A549 (cell line): ENCODE measurements at regions of chr9 and their contacts with region 1.

Region 1: GRCh38 chr9:121278535-121279261 is 10.7 kb downstream of the GSN start:
- DNase-seq: peak in 1 of 2 experiments; percentile 75
- ATAC-seq: peak; percentile 75 to 87
- H3K4me3 ChIP-seq: no peak overlapping the region
- H3K27ac ChIP-seq: peak overlapping the region; percentile 58 to 83
- H3K4me1 ChIP-seq: peaks cover 57% of the 10 kb centered on the region
- CTCF ChIP-seq: peak; percentile 88
- EP300 ChIP-seq: no peak
- POLR2A ChIP-seq: no peak
- RAD21 ChIP-seq: peak; percentile 80 to 85

Region 2: DNA sequence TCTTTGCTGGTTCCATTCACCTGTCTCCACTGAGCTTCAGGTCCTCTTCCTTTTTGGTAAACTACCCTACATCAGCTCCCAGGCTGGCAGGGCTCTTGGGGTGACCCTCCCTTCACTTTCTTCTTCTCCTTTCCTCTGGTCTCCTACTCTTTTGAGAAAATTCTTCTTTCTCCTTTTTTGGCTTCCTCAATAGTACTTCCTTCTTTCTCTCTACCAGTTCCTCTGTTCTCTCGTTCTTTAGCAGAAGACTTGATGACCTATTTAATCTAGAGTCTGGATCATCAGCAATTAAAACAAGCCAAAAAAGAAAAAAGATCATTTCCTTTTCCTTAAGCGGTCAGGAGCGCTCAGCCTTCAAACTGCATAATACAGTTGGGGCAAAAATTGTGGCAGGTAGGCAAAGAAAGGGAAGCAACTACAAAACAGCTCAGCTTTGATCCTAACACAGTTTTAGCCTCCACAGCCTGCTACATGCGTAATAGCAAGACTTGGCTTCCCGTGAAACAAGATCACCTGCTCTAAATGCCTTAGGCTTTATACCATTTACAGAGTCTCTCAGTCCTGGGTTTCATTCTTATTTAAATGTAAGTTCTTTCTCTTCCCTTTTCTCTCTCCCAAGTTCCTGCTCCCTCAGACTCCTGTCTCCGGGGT is 24.8 kb before region 1 on chr9:
- CTCF ChIA-PET with region 1: interaction called, 17 read pairs
- POLR2A ChIA-PET with region 1: no interaction called
- DNase-seq: no peak
- ATAC-seq: no peak
- H3K4me3 ChIP-seq: no peak overlapping the region
- H3K27ac ChIP-seq: no peak overlapping the region
- H3K4me1 ChIP-seq: no peaks in the 10 kb centered on the region
- CTCF ChIP-seq: no peak
- EP300 ChIP-seq: no peak
- POLR2A ChIP-seq: no peak
- RAD21 ChIP-seq: no peak

Region 3: DNA sequence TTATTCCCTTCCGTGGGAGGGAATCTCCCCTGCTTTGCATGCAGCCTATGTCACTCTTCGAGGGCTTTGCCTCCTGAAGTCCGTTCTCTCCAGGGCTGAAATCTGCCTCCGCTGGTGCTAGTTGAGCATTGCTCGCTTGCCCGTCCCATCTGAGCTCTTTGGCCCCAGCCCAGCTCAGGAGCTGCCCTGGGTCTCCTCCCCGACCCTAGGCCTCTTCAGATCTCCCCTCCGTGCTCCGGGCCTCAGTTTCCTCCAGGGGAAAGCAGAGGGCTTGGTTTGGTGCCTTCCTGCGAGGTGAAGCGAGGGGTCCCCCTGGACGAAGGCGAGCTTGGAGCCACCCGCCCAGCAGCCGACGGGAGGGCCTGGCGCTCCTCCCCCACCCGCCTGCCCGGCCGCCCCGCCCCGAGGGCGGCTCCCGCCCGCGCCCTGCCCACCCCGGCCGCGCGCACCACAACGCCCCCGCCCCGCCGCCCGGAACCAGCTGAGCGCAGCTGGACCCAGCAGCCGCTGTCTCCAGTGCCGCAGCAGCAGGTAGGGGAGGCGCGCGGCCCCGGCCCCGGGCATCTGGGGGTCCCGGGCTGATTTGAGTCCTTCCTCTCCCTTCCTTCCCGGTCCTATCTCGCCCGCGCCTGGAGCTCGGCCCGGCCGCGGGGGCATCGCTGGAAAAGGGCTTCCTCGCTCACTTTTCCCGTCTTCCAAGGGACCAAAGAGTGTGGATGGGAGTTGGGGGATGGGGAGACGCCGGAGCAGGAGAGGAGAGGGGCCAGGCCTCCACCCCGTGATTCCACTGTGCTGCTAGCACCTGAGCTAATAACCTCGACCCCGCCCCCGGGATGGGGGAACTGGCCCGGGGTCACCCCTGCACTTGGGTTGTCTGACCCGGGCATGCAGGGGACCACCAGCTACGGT is 10.8 kb before region 1 on chr9 and contains the start of gene GSN:
- CTCF ChIA-PET with region 1: interaction called, 46 read pairs
- POLR2A ChIA-PET with region 1: interaction called, 24 read pairs
- DNase-seq: peak; percentile 62 to 69
- ATAC-seq: peak; percentile 89 to 92
- H3K4me3 ChIP-seq: peak within 1 kb of the TSS; percentile 95
- H3K27ac ChIP-seq: peak within 1 kb of the TSS; percentile 80 to 92
- H3K4me1 ChIP-seq: peaks cover 28% of the 10 kb centered on the region
- CTCF ChIP-seq: no peak
- EP300 ChIP-seq: no peak
- POLR2A ChIP-seq: peak; percentile 91
- RAD21 ChIP-seq: no peak; a peak in 1 of 5 replicates
- polyA plus RNA-seq, gene GSN: 77.2 and 88.5 TPM in 2 replicates

Region 4: GRCh38 chr9:121305269-121305994 is 26.7 kb after region 1 on chr9:
- CTCF ChIA-PET with region 1: interaction called, 10 read pairs
- POLR2A ChIA-PET with region 1: no interaction called
- DNase-seq: no peak
- ATAC-seq: no peak
- H3K4me3 ChIP-seq: no peak overlapping the region
- H3K27ac ChIP-seq: peak overlapping the region in 1 of 2 experiments; percentile 30; a peak in 2 of 6 replicates
- H3K4me1 ChIP-seq: peaks cover 20% of the 10 kb centered on the region
- CTCF ChIP-seq: no peak
- EP300 ChIP-seq: no peak
- POLR2A ChIP-seq: no peak
- RAD21 ChIP-seq: no peak

Region 5: DNA sequence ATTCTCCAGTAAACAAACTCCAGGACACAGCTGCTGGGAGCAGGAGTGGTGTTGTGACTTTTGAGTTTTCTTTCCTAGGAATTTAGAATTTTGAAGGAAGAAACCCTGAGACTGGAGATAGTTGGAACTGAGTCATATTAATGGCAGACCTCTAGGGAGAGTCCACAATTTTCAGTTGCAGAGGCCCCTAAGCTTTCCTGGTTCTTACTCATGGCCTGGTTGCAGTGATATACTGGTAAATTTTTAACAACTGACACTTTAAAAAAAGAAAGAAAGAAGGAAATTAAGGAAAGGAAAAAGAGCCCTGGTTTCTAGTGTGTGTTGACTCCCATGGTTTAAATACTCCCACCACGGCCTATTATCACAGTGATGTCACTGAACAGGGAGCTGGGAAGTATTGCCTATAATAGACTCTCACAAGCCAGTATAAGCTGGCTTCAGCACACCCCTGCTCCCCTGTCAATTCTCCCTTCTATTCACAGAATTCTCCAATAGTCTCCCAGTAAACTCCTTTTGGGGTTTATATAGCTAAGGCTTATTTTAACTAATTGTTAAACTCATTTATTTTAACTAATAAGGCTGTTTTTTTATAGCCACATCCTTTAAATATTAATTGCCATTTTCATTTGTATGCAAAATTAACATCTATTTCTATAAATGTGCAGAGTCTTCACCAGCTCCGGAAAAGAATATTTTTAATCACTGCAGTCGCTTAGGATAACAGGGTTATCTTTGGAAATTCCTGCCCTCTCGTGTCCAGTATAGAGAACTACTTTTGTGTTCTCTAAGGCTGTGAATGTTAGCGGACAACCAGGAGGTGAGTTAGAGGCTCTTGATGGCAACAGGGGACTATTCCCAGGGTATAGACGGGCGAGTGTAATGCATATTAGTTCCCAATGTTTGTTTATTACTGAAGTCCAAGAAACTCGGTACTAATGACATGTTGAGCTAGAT is 161.3 kb after region 1 on chr9:
- CTCF ChIA-PET with region 1: interaction called, 10 read pairs
- POLR2A ChIA-PET with region 1: no interaction called
- DNase-seq: peak; percentile 49 to 70
- ATAC-seq: peak; percentile 92 to 97
- H3K4me3 ChIP-seq: no peak overlapping the region
- H3K27ac ChIP-seq: no peak overlapping the region
- H3K4me1 ChIP-seq: no peaks in the 10 kb centered on the region
- CTCF ChIP-seq: peak; percentile 40
- EP300 ChIP-seq: no peak
- POLR2A ChIP-seq: no peak
- RAD21 ChIP-seq: peak; percentile 33 to 41; a peak in 2 of 5 replicates

Region 6: DNA sequence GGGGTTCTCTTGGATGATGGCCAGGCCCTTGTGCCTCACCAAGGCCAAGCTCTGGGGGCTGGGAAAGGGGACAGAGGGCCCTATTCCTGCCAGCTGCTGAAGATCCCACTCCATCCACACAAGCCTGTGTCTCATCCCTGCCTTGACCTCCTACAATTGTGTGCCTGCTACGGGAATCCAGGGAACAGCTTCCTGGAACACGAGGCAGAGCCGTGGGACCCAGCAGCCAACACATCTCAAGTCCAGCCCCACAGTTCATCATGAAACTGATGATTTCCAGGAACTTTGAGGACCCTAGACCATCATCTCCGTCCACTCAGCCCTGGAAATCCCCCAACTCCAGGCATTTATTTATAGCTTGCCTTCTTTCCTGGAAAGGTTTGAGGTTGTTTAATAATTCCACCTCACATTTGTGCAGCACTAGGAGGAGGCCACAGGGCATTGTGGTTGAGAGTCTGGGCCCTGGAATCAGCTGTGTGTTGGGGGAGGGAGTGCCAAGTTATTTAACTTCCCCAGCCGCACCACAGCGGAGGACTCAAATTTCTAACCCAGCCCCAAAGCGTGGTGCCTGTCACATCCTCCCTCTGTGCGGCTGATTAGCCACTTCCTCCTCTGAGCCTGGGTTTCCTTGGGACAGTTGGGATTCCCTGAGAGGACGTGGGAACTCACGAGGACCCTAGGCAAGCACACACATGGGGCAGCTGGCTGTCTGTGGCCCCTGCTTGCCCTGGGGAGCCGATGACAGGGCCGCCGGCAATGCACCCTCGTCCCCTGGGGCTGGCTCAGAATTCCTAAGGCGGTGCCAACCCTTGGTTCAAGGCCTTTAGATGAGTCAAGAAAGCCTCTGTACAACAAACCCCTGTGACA is 279.1 kb after region 1 on chr9:
- CTCF ChIA-PET with region 1: no interaction called
- POLR2A ChIA-PET with region 1: no interaction called
- DNase-seq: peak in 1 of 2 experiments; percentile 26
- ATAC-seq: no peak; a peak in 1 of 6 replicates
- H3K4me3 ChIP-seq: no peak overlapping the region
- H3K27ac ChIP-seq: peak overlapping the region in 1 of 2 experiments; percentile 4; a peak in 1 of 6 replicates
- H3K4me1 ChIP-seq: peaks cover 17% of the 10 kb centered on the region
- CTCF ChIP-seq: no peak
- EP300 ChIP-seq: no peak
- POLR2A ChIP-seq: no peak
- RAD21 ChIP-seq: no peak